PC-3 (cell line): ENCODE measurements at regions of chr14 and their contacts with region 1.

Region 1: DNA sequence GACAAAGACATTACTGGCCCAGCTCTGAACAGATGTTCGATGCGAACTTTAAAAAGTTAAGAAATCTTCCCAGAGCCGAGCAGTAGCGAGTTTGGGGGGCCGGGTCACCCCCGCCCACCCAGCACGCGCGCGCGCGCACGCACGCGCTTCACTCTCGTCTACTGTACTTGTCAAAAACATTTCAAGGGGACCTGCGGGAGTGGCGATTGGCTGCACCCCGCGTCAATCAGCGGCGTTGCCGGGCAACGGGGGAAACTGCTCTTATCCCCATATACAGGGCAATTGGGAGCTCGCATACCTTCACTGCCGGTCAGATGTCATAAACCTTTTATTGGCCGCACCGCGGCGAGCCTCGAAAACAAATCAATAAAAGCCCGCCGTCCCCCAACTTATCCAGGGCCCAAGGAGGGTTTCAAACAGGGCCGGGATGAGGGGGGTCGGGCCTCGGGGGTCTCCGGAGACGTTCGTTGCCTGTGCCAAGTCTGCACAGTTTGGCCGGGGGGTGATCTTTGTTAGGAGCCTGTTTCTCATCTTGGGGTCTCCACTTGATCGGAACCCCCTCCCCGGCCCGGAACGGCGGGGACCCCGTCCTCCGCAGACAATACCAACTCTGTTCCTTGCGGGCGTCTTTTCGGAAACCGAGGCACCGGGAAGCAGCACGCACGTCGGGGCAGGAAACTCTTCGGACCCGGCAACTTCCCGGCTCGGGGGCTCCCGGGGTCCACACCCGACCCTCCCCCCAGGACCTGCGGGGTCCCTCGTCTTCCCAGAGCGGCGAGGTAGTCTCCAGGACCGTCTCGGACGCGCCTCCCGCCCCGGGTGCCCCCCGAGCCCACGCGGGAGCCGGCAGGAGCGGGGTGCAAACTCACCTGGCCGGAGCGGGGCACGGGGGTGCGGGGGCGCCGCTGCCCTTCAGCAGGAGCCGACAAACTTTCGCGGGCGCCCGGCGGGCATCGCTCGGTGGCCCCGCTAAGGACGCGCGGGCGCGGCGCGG is 734 bp downstream of the FOXN3 start:
- DNase-seq: peak; percentile 98
- ATAC-seq: peak; percentile 72
- H3K4me3 ChIP-seq: peak overlapping the region; percentile 95
- H3K27ac ChIP-seq: no peak overlapping the region
- H3K4me1 ChIP-seq: peaks cover 28% of the 10 kb centered on the region
- H3K27me3 ChIP-seq: no peaks in the 10 kb centered on the region
- CTCF ChIP-seq: no peak

Region 2: DNA sequence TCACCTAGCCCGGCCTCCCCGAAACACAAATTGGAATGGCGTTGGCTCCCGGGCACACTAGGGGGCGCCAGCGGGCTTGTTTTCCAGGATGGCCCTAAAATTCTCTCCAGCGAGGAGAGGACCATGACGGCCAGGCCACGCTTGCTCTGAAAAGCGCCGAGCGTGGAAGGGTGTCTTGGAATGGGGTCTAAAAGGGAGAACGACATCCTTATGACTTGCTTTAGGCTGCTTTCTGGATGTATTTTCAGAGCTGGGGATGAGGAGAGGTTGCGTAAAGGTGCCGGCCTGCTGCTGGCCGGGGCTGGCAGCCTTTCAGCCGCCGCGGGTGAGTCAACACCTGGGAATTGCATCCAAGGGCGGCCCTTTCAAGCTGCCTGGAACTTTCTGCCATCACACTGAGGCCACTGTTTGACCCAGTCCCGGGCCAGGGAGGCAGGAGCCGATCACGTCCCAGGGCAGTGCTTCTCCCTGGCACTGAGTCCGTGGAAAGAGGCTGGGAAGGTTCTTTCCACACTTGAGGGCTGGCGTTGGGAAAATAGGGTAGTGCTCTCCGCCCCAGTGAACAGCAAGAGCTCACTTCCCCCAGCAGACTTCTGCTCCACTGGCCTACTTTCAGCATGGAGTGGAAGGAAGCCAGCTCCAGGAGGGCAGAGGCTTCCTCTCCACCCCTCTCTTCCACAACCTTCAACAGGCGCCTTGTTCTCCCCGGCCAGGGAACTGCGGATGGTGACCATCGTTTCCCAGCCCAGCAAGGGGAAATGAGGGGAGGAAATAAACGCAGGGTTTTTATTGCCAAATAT is 375.6 kb before region 1 on chr14:
- CTCF ChIA-PET with region 1: no interaction called
- POLR2A ChIA-PET with region 1: no interaction called
- intact Hi-C with region 1: loop called (anchors 1 kb)
- DNase-seq: peak; percentile 90
- ATAC-seq: peak; percentile 91
- H3K4me3 ChIP-seq: peak overlapping the region; percentile 66
- H3K27ac ChIP-seq: peak overlapping the region; percentile 94
- H3K4me1 ChIP-seq: peaks cover 23% of the 10 kb centered on the region
- H3K27me3 ChIP-seq: no peaks in the 10 kb centered on the region
- CTCF ChIP-seq: peak; percentile 98

Region 3: DNA sequence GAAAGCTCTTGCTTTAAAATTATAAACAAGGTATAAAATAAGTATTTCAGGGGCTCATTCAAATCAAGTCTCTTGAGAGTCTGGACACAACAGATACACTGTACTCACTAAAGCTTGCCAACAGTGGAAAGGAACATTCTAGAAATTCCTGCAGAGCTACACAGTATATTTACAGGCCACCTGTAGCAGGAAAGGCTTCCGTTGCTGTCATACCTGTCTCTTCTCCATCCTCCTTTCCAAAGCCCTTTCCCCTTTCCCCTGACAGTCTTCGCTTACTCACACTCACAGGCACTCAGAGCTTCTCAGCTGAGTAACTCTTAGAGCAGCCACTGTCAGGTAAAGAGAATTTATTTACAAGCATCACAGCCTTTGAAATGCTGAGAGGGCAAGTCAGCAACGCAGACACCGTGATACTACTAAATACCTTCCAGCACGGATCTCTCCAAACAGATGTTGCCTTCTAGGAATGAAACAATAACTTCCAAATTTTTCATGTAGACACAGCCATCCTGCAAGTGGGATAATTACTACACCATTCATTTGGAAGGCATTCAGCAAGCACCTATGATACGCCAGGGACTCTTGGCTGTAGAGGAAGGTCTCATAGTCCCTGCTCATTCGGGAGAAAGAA is 167.1 kb before region 1 on chr14:
- CTCF ChIA-PET with region 1: no interaction called
- POLR2A ChIA-PET with region 1: no interaction called
- intact Hi-C with region 1: loop called (anchors 5 kb)
- DNase-seq: peak; percentile 94
- ATAC-seq: peak; percentile 97
- H3K4me3 ChIP-seq: peak overlapping the region; percentile 39; the same call in 1 of the 2 replicates
- H3K27ac ChIP-seq: peak overlapping the region; percentile 23; the same call in 1 of the 2 replicates
- H3K4me1 ChIP-seq: peaks cover 35% of the 10 kb centered on the region
- H3K27me3 ChIP-seq: no peaks in the 10 kb centered on the region
- CTCF ChIP-seq: no peak

Region 4: DNA sequence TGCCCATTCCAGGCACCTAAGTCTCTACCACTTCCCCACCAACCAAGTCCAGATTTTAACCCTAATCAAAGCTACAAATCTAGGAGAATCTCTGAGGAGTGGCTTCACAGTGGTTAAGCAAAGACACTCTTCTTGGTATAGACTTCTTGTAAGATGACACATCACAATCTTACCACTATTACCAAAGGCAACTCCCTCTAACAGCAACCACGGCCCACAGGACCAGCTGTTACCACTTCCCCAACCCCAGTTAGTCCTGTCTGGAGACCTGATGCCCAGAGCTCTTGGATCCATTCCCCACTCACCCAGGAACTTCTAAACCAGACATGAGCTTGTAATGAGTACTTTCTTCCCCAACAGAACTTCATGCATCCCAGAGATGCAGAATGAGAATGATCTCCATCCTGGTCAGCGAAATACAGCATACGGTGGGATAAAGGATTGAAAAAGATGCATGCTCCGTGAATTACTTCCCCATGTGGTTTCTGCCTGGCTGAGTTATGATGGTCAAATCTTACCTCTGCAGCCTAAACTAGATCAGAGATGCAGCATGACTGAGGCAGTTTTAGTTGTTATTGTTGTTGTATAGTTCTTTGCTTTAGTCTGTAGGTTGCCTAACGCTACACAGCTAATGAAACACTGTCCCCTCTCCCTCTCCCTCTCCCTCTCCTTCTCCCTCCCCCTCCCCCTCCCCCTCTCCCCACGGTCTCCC is 88.5 kb after region 1 on chr14:
- CTCF ChIA-PET with region 1: no interaction called
- POLR2A ChIA-PET with region 1: no interaction called
- intact Hi-C with region 1: loop called (anchors 5 kb)
- DNase-seq: peak; percentile 35
- ATAC-seq: no peak
- H3K4me3 ChIP-seq: no peak overlapping the region
- H3K27ac ChIP-seq: no peak overlapping the region
- H3K4me1 ChIP-seq: peaks cover 28% of the 10 kb centered on the region
- H3K27me3 ChIP-seq: no peaks in the 10 kb centered on the region
- CTCF ChIP-seq: no peak

Region 5: DNA sequence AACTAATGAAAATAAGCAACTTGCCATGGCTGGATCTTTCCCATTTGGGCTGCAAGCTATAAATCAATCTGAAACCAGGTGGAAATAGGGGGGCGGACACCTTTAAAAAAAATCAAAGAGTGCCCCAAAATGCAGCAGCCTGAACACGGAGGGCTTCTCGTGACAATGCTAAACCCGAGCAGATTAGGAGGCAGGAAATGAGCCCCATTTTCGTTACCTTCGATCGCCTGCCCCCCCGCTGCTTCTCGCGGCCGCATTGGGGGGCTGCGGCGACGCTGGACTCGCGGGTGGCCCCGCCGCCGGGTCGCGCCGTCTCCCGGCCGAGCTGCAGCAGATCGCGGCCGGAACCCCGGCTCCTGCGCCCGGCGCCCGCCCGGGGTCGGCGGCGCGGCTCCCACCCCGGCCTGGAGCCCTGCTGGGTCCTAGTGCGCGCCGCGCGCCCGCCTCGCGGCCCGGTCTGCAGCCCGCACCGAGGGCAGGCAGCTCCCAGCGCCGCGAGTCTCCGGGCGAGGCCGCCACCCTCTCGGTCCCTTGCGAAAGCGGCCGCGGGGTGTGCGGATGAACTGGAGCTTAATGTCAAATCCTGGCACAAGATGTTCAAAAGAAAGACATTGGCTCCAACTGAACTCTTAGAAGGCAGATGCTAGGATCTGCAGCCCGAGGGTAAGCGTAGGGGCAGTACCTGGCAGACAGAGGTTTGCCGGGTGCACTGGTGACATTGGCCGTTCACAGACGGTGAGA is 202.7 kb after region 1 on chr14:
- CTCF ChIA-PET with region 1: no interaction called
- POLR2A ChIA-PET with region 1: no interaction called
- intact Hi-C with region 1: loop called (anchors 2 kb)
- DNase-seq: peak; percentile 58
- ATAC-seq: peak; percentile 83
- H3K4me3 ChIP-seq: peak overlapping the region; percentile 79
- H3K27ac ChIP-seq: no peak overlapping the region
- H3K4me1 ChIP-seq: 0 out of 2 replicates have a peak, but pooled peaks cover 4% of the 10 kb centered on the region
- H3K27me3 ChIP-seq: no peaks in the 10 kb centered on the region
- CTCF ChIP-seq: no peak

Region 6: GRCh38 chr14:89855961-89856656 is 439.8 kb after region 1 on chr14:
- CTCF ChIA-PET with region 1: no interaction called
- POLR2A ChIA-PET with region 1: no interaction called
- intact Hi-C with region 1: loop called (anchors 10 kb)
- DNase-seq: peak; percentile 73
- ATAC-seq: peak; percentile 38
- H3K4me3 ChIP-seq: no peak overlapping the region
- H3K27ac ChIP-seq: peak overlapping the region; percentile 83
- H3K4me1 ChIP-seq: peaks cover 29% of the 10 kb centered on the region
- H3K27me3 ChIP-seq: no peaks in the 10 kb centered on the region
- CTCF ChIP-seq: no peak

Region 7: DNA sequence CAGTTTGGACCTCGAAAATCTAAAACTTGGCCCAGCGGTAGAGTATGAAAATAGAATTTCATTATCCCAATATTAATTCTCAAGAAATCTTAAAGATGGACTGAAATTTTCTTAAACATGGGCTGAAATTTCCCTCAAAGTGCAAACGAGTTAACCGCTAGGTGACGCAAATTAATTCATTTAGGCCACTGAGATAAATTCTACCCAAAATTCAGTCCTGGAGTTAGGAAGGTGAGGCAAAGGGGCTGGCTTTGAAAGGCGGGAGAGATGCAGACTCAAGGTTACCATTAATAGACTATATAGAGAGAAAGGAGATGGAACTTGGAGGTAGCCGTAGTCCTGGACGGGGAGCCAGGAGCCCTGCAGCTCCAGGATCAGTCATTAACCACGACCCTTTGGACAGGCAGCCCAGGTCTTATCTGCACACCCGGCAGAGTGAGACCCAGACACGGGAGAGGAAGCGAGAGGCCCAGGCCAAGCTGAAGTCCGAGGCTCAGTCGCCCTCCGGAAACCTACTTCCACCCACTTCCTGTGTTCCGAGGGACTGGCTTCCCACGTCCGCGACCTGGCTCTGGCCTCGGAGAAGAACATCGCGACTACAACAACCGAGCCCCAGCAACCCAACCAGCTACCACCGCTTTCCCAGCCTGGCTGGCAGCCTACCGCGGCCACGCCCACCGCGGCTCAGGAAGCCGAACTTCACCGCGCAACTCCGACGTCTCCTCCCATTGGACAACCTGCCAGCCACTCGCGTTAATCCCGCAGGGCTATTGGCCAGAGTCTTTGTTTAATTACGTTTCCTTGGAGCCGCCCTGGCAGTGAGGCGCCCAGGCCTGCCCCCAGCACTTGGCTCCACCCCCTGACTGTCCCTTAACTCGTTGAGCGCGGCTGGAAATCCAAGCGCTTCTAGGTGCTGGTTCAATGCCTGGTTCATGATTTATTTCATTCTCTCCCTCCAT is 538.0 kb after region 1 on chr14 and contains the start of gene EFCAB11:
- CTCF ChIA-PET with region 1: no interaction called
- POLR2A ChIA-PET with region 1: interaction called, 3 read pairs
- intact Hi-C with region 1: loop called (anchors 1 kb)
- DNase-seq: peak; percentile 99
- ATAC-seq: peak; percentile 75
- H3K4me3 ChIP-seq: peak within 1 kb of the TSS; percentile 81
- H3K27ac ChIP-seq: peak within 1 kb of the TSS; percentile 61
- H3K4me1 ChIP-seq: peaks cover 20% of the 10 kb centered on the region
- H3K27me3 ChIP-seq: no peaks in the 10 kb centered on the region
- CTCF ChIP-seq: peak; percentile 40; the same call in 1 of the 2 replicates
- total RNA-seq, gene EFCAB11: 7.0 and 10.0 TPM in 2 replicates